Ovary (tissue), 10 donors: ENCODE measurements at regions of chr17 and their contacts with region 1.

Region 1: GRCh38 chr17:17119533-17119932 is 77.3 kb downstream of the MPRIP start:
- DNase-seq: peak in 1 of 5 donors; percentile 35
- H3K4me3 ChIP-seq: no peak overlapping the region
- H3K27ac ChIP-seq: peak overlapping the region in 1 of 2 donors; percentile 60
- H3K4me1 ChIP-seq: peaks cover 49% of the 10 kb centered on the region
- H3K27me3 ChIP-seq: no peaks in the 10 kb centered on the region
- CTCF ChIP-seq: no peak
- EP300 ChIP-seq: no peak
- POLR2A ChIP-seq: no peak

Region 2: DNA sequence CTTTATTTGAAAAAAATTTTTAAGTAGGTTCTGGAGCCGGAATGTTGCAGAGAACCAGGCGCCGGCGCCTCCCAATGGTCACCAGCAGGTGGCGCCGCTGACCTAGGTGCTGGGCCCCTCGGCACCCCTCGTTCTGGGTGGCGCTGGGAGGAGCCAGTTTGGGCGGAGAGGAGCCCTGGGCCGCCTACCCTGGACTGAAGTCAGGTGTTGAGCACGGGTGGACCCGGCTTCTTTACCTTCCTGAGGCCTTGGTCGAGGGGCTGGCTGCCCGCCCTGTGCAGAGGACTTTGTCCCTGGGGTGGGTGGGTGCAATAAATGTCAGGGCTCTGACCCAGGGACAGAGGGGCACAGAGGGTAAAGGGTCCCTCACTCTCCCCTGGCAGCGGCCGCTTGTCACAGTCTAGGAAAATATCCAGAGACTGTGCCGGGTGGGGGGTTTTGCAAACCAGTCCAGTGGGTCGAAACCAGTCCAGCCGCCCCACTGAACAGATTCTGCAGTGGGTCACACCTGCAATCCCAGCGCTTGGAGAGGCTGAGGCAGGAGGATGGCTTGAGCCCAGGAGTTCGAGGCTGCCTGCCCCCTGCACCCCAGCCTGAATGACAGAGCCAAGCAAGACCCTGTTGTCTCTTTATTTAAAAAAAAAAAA is 117.5 kb before region 1 on chr17:
- intact Hi-C with region 1: loop called in 1 of 4 experiments (anchors 5 kb)
- DNase-seq: peak; percentile 71 to 89 (median 83)
- H3K4me3 ChIP-seq: no peak overlapping the region
- H3K27ac ChIP-seq: no peak overlapping the region
- H3K4me1 ChIP-seq: peaks cover 2% of the 10 kb centered on the region
- H3K27me3 ChIP-seq: no peaks in the 10 kb centered on the region
- CTCF ChIP-seq: peak; percentile 86 to 97 (median 86)
- EP300 ChIP-seq: no peak
- POLR2A ChIP-seq: no peak

Region 3: DNA sequence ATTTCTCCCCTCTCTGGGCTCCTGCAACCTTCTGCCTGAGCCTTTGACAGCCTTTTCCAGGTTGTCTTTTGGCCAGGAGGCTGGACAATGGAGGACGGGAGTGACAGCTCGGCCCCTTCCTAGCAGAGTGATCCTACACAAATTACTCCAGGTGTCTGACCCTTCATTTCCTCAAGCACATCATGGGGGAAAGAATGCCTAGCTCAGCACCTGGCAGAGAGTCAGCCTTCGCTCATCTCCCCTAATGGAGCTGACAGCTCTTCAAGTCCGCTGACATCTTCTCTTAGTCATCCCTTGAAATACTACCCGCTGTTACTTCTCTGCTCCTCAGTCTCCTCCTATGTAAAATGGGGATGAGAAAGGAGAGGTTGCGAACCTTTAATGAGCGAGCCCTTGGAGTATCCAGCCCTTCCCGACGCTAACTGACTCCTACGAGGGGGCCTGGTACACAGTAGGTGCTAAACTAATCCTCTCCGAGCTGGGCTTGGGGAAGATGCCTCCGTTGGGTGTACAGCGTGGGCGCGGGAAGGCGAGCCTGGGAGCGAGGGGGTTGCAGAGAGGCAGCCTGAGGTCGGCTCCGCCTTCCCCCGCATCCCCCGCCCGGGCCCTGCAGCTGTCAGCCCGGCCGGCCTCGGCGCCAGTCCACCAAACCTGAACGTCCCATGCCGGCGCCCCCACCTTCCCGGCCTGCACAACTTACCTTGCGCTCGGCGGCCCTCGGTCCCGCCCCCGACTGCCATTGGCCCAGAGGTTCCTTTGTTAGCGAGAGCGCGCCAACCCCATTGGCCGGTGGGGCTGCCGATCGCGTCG is 77.8 kb before region 1 on chr17:
- intact Hi-C with region 1: loop called in 1 of 4 experiments (anchors 10 kb)
- DNase-seq: peak; percentile 99 to 100 (median 99)
- H3K4me3 ChIP-seq: peak overlapping the region; percentile 44
- H3K27ac ChIP-seq: no peak overlapping the region
- H3K4me1 ChIP-seq: peaks cover 10% of the 10 kb centered on the region
- H3K27me3 ChIP-seq: no peaks in the 10 kb centered on the region
- CTCF ChIP-seq: no peak
- EP300 ChIP-seq: no peak
- POLR2A ChIP-seq: no peak

Region 4: DNA sequence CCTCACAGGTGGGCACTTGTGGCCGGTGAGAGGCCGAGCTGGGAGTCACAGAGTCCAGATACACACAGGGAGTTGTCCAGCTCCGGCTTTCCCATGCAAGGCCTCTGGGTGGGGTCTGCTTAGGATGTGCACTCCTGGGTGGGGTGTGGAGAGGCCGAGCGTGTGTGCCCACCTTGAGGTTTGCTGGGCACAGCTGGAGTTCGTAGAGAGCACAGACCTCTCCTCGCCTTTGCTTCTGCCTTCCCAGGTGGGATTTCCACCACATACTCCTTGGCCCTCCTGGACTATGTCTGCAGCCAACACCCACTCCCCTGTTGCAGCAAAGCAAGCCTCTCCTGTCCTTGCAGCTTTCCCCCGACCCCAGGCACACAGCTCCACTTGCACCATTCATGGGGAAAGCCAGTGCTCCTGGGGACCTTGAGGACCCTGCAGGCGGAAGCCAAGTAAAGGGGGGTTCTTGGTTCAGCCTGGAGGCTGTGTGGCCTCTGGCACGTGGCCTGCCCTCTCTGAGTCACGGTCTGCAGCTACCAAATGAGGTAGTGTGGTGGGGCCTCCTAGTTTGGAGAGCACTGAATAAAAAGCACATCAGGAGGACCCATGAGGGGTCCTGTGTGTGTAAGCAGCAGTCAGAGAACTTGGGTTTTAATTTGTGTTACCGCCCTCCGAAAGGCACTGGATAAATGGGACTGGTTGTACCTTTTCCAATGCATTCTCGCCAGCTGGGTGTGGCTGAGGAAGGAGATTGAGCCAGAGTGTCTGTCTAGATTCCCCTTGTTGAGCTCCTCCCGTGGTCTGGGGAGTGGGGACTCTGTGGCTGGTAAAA is 45.7 kb before region 1 on chr17:
- intact Hi-C with region 1: loop called in 1 of 4 experiments (anchors 5 kb)
- DNase-seq: peak in 2 of 5 donors; percentile 23 to 37
- H3K4me3 ChIP-seq: no peak overlapping the region
- H3K27ac ChIP-seq: no peak overlapping the region
- H3K4me1 ChIP-seq: peaks cover 19% of the 10 kb centered on the region
- H3K27me3 ChIP-seq: no peaks in the 10 kb centered on the region
- CTCF ChIP-seq: no peak
- EP300 ChIP-seq: no peak
- POLR2A ChIP-seq: no peak